Astrocyte of the cerebellum (primary cell): ENCODE measurements at regions of chr10 and their contacts with region 1.

Region 1: GRCh38 chr10:78413076-78414055 is 379.7 kb downstream of the RPS24 start:
- DNase-seq: no peak
- H3K4me3 ChIP-seq: no peak overlapping the region
- CTCF ChIP-seq: no peak

Region 2: DNA sequence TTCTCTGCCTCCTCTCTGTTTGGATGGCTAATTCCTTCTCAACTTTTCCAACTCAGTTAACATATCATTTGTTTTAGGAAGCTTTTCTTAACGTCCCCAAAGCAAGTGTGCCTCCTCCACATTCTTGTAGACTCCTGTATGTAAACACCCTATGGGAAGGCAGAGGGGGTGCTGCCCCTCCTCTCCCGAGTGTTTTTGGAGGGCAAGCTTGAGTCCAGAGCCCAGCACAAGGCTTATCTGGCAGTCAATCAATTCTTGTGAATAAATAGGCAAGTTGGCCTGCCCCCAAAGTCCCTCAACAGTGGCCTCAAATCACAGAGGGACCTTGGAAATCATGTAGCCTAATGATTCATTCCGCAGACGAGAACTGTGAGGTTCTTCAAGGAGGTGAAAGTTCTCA is 74.1 kb before region 1 on chr10:
- in situ Hi-C with region 1: no loop called
- DNase-seq: no peak
- H3K4me3 ChIP-seq: no peak overlapping the region
- CTCF ChIP-seq: no peak

Region 3: DNA sequence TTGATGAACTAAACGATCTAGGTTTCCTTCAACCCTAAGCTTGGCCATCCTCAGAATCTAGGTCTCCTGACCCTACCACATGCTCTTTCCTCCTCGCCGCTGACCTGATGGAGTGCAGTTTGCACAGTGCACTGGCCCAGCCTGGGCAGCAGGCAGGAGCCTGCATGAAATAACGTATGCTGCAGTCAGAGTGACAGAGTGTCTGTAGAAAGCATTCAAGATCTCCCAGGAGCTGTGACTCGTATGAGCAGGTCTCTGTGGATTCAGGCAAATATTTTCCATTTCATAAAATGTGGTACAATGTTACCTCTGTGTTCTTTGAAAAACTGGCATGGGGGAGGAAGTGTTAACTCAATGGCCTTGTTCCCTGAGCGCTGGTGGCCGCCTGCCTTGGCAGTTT is 62.1 kb after region 1 on chr10:
- in situ Hi-C with region 1: loop called (anchors 5 kb)
- DNase-seq: no peak
- H3K4me3 ChIP-seq: no peak overlapping the region
- CTCF ChIP-seq: no peak